ENCODE measurements at regions of chr7 and their contacts with region 1.

Region 1: DNA sequence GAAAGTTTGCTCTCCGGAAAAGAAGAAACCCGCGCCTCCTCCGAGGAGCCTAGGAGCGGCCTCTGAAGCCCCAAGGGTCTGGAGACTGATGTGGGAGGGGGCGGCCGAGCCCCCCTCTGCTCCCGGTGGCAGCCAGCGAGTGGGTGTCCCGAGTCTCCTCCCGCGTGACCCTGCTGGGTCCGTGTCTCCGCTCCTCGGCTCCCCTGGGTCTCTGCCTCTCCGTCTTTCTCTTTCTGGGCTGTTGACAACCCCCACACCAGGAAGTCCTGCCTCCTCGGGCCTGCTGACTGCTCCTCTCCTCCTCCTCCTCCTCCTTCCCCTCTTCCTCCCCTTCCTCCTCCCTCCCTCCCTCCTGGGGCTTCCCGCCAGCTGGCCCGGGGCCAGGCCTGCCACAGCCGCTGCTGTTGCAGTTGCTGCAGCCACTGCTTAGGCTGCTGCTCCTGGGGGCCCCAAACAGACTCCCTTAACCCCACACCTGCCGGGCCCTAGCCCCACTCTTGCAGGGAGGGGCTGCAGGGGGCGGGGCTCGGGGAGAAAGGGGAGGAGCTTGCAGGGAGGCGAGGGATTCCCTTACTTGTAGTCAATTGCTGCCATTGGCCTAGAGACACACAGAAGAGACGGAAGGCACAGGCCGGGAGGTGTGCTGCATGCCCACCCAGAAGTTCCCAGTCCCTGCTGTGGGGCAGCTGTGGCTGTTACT is at the start of gene TSC22D4:
- DNase-seq: peak; percentile 98 to 100 (median 98)
- H3K4me3 ChIP-seq: peak within 1 kb of the TSS; percentile 98
- H3K27ac ChIP-seq: peak within 1 kb of the TSS; percentile 80 to 81
- H3K4me1 ChIP-seq: peaks cover 11% of the 10 kb centered on the region
- H3K27me3 ChIP-seq: no peaks in the 10 kb centered on the region
- CTCF ChIP-seq: no peak
- EP300 ChIP-seq: no peak
- POLR2A ChIP-seq: peak; percentile 75
- total RNA-seq, gene TSC22D4: 19.8 to 57.3 (median 47.5) TPM

Region 2: GRCh38 chr7:100266576-100267354 is 212.4 kb before region 1 on chr7:
- intact Hi-C with region 1: no loop called
- DNase-seq: no peak
- H3K4me3 ChIP-seq: no peak overlapping the region
- H3K27ac ChIP-seq: no peak overlapping the region
- H3K4me1 ChIP-seq: peaks cover 5% of the 10 kb centered on the region
- H3K27me3 ChIP-seq: no peaks in the 10 kb centered on the region
- CTCF ChIP-seq: no peak
- EP300 ChIP-seq: no peak
- POLR2A ChIP-seq: no peak

Region 3: DNA sequence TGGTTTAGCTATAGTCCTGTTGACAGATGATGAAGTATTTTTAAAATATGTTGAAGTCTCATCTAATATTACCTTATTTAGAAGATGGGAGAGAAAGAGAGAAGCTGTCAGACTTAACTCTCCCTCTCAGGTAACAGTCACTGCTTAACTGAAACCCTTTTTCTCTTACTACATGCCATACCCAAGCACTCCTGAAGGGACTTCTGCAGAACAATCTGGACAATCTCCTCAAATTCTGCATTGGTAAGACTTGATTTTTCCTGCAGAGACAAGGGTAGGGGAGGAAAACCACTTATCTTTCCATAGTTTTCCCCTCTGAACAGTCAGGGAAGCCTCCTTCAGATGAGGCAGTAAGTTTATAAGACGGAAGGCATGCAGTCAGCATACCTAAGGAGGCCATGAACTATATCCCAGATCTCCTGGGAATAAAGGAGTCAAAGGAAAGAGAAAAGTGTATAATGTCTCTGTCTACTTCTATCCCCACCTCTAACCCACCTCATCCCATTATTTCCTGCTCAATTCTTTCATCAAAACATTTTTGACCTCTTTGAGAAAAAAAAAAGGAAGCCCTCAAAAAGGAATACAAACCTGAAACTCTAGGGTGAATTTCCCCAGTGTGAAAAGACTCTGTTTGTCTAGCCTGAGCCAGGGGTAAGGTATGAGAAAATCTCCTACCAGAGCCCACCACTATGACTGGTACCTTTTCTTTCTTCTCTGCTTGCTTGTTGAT is 60.0 kb before region 1 on chr7:
- intact Hi-C with region 1: no loop called
- DNase-seq: no peak
- H3K4me3 ChIP-seq: no peak overlapping the region
- H3K27ac ChIP-seq: no peak overlapping the region
- H3K4me1 ChIP-seq: no peaks in the 10 kb centered on the region
- H3K27me3 ChIP-seq: no peaks in the 10 kb centered on the region
- CTCF ChIP-seq: no peak
- EP300 ChIP-seq: no peak
- POLR2A ChIP-seq: no peak

Region 4: GRCh38 chr7:100545360-100546128 is 66.4 kb after region 1 on chr7:
- intact Hi-C with region 1: loop called in 1 of 4 experiments (anchors 5 kb)
- DNase-seq: peak; percentile 69 to 87 (median 74)
- H3K4me3 ChIP-seq: no peak overlapping the region
- H3K27ac ChIP-seq: peak overlapping the region; percentile 82 to 86
- H3K4me1 ChIP-seq: peaks cover 50% of the 10 kb centered on the region
- H3K27me3 ChIP-seq: no peaks in the 10 kb centered on the region
- CTCF ChIP-seq: peak in 1 of 3 donors; percentile 23
- EP300 ChIP-seq: no peak
- POLR2A ChIP-seq: no peak

Region 5: DNA sequence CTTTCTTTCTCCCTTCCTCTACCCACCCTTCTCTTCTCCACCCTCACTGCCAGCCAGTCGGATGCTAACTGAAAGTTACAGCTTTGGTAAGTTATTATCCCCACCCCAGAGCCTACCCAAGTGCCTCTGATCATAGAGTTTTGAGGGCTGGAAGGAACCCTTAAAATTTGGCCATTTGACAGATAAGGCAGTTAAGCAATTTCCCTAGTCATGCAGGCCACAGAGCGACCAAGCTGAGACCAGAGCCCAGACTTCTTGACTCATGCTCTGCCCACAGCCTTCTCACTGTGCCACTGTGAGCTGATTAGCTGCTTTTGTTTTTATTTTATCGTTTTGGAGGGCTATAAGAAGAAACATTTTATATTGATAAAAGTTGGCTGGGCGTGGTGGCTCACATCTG is 77.4 kb after region 1 on chr7:
- intact Hi-C with region 1: loop called in 3 of 4 experiments (anchors 5 kb)
- DNase-seq: no peak
- H3K4me3 ChIP-seq: no peak overlapping the region
- H3K27ac ChIP-seq: no peak overlapping the region
- H3K4me1 ChIP-seq: no peaks in the 10 kb centered on the region
- H3K27me3 ChIP-seq: no peaks in the 10 kb centered on the region
- CTCF ChIP-seq: no peak
- EP300 ChIP-seq: no peak
- POLR2A ChIP-seq: no peak

Region 6: DNA sequence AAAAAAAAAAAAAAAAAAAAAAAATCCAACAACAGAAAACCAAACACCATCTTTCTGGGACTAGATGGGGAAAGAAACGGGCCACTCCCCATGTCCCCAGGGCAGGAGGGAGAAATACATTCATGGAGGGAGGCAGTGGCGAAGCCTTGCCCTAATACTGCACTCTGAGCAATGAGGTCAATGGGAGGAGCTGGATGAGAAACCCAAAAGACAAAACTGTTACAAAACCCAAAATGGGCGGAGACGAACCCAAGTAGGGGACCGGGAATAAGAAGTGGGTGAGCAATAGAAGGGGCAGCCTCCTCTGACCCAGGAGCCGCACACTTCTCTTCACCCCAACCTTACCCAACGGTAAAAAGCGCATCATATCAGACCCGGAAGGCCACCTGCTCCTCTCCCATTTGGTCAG is 201.1 kb after region 1 on chr7:
- intact Hi-C with region 1: loop called in 1 of 4 experiments (anchors 5 kb)
- DNase-seq: peak in 3 of 5 donors; percentile 34 to 70 (median 53)
- H3K4me3 ChIP-seq: no peak overlapping the region
- H3K27ac ChIP-seq: no peak overlapping the region
- H3K4me1 ChIP-seq: peaks cover 1% of the 10 kb centered on the region
- H3K27me3 ChIP-seq: no peaks in the 10 kb centered on the region
- CTCF ChIP-seq: no peak
- EP300 ChIP-seq: no peak
- POLR2A ChIP-seq: no peak

Region 7: DNA sequence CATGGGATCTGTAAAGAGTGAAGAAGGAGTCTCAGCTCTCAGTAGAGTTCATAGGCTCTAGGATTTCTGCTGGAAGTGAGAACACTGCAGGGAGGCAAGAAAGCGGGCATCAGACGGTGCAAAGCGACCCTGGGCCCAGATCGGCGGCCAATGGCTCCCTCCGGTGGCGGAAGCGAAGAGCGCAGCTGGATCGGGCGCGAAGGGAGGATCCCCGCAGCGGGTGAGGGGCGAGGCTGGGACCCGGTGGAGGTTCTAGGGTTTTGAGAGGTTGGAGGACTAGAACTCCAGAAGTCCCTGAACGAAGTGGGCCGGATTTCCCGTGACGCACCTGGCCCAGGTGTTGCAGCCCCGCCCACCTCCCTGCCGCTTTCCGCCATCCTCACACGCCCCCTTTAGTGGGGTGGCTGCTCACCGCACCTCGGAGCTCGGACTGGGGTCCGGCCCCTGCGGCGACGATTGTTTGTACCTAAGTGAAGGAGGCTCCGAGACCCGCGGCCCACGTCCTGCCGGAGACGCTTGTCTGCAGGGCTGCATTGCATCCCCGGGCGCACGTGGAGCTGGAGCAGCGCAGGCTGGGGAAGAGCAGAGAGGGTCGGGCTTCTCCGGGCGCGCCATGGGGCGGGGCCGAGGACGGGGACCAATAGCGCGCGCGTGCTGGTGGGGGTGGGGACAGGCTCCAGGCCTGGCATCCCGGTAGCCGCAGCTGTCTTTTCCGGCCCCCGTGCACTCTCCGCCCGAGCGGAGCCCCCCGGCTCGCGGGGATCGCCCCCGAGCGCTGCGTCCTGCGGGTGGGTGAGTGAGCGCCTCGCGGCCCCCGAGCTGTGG is 373.1 kb after region 1 on chr7 and contains the start of gene SLC12A9:
- intact Hi-C with region 1: loop called in 1 of 4 experiments (anchors 10 kb)
- DNase-seq: peak; percentile 87 to 93 (median 90)
- H3K4me3 ChIP-seq: peak within 1 kb of the TSS; percentile 48
- H3K27ac ChIP-seq: peak within 1 kb of the TSS in 1 of 2 donors; percentile 66
- H3K4me1 ChIP-seq: no peaks in the 10 kb centered on the region
- H3K27me3 ChIP-seq: no peaks in the 10 kb centered on the region
- CTCF ChIP-seq: peak; percentile 94 to 95 (median 94)
- EP300 ChIP-seq: no peak
- POLR2A ChIP-seq: no peak
- total RNA-seq, gene SLC12A9: 10.1 to 31.8 (median 26.9) TPM

Region 8: GRCh38 chr7:100867040-100867775 is 388.1 kb after region 1 on chr7 and contains the start of gene TRIP6:
- intact Hi-C with region 1: loop called in 2 of 4 experiments (anchors 10 kb)
- DNase-seq: peak; percentile 97 to 99 (median 98)
- H3K4me3 ChIP-seq: peak within 1 kb of the TSS; percentile 99
- H3K27ac ChIP-seq: peak within 1 kb of the TSS; percentile 88 to 96
- H3K4me1 ChIP-seq: peaks cover 10% of the 10 kb centered on the region
- H3K27me3 ChIP-seq: no peaks in the 10 kb centered on the region
- CTCF ChIP-seq: peak in 1 of 3 donors; percentile 25
- EP300 ChIP-seq: no peak
- POLR2A ChIP-seq: peak; percentile 37
- total RNA-seq, gene TRIP6: 42.9 to 98.8 (median 82.0) TPM

Region 9: DNA sequence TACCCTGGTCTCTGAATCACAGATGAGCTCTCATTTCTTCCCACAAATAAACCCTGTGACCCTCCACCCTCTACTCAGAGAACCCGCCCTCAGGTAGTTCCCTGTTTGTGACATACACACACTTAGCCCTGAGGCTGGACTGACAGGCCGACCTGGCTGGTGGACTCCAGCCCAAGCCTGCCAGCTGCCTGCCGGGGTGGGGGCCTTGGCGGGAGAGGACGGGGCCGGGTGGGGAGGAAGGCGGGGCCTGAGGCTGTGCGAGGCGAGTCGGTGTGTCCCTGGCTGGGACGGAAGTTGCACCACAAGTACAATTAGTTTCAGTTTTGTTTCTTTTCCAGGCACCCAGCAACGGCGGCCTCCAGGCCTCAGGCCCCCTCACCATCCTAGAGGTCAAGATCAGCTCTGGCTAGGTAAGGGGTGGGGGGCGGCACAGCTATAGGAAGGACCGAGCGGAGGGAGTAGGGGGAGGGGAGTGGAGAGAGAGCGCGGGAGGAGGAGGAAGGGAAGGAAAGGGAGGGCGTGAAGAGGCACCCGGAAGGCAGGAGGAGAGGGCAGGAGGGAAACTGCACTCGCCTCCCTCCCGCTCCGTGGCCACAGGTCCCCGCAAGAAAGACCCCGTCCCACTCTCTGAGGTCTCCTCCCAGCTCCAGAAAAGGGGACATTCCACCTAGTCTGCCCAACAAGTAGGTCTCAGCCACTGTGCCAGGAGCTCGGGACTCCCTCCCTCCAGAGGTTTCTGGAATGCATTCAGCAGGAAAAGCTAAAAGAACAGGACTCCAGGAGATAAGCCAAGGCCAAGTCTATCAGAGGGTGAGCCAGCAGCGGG is 606.3 kb after region 1 on chr7 and contains the start of gene TRIM56:
- intact Hi-C with region 1: loop called in 1 of 4 experiments (anchors 10 kb)
- DNase-seq: peak; percentile 88 to 92 (median 90)
- H3K4me3 ChIP-seq: peak within 1 kb of the TSS; percentile 78
- H3K27ac ChIP-seq: peak within 1 kb of the TSS; percentile 64 to 91
- H3K4me1 ChIP-seq: peaks cover 7% of the 10 kb centered on the region
- H3K27me3 ChIP-seq: no peaks in the 10 kb centered on the region
- CTCF ChIP-seq: no peak
- EP300 ChIP-seq: no peak
- POLR2A ChIP-seq: peak; percentile 71
- total RNA-seq, gene TRIM56: 18.2 to 77.4 (median 48.5) TPM

Measured in ovary (tissue), 10 donors.